ENCODE measurements at regions of chr22 and their contacts with region 1.

Region 1: GRCh38 chr22:45107671-45108070 is 56.1 kb upstream of the NUP50 start:
- DNase-seq: no peak
- H3K4me3 ChIP-seq: no peak overlapping the region
- H3K27ac ChIP-seq: no peak overlapping the region
- H3K4me1 ChIP-seq: no peaks in the 10 kb centered on the region
- H3K27me3 ChIP-seq: peaks cover 0 to 1% (median 0%) of the 10 kb centered on the region in 4 experiments; a peak in 1 of 7 replicates
- CTCF ChIP-seq: no peak
- EP300 ChIP-seq: no peak
- POLR2A ChIP-seq: no peak
- RAD21 ChIP-seq: no peak

Region 2: GRCh38 chr22:45096256-45096907 is 11.3 kb before region 1 on chr22:
- CTCF ChIA-PET with region 1: interaction called, 33 read pairs
- POLR2A ChIA-PET with region 1: no interaction called
- DNase-seq: peak in 1 of 2 experiments; percentile 81
- H3K4me3 ChIP-seq: no peak overlapping the region
- H3K27ac ChIP-seq: no peak overlapping the region
- H3K4me1 ChIP-seq: peaks cover 0 to 4% (median 0%) of the 10 kb centered on the region in 4 experiments; a peak in 2 of 7 replicates
- H3K27me3 ChIP-seq: no peaks in the 10 kb centered on the region
- CTCF ChIP-seq: peak; percentile 64 to 91 (median 86)
- EP300 ChIP-seq: no peak
- POLR2A ChIP-seq: no peak
- RAD21 ChIP-seq: peak; percentile 81 to 86

Region 3: DNA sequence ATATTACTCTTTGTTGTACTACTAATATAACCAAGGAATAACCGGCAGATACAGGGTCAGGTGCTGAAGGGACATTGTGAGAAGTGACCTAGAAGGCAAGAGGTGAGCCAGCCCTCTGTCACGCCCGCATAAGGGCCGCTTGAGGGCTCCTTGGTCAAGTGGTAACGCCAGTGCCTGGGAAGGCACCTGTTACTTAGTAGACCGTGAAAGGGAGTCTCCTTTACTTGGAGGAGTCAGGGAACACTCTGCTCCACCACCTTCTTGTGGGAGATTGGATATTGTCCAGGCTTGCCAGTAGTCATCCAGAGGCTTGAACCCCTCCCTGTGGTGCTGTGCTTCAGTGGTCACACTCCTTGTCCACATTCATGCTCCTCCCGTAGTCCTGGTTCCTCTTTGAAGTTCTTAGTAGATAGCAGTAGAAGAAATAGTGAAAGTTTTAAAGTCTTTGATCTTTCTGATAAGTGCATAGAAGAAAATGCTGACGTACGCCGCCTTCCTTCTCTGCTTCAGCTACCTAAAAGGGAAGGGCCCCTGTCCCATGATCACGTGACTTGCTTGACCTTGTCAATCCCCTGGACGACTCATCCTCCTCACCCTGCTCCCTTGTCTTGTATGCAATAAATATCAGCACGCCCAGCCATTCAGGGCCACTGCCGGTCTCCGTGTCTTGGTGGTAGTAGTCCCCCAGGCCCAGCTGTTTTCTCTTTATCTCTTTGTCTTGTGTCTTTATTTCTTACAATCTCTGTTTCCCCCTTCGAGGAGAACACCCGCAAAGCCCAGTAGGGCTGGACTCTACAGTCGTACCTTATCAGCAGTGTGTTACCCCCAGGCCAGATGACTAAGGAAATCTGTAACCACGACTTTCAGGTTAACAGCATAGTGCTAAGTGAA is 62.1 kb after region 1 on chr22:
- CTCF ChIA-PET with region 1: no interaction called
- POLR2A ChIA-PET with region 1: no interaction called
- DNase-seq: no peak
- H3K4me3 ChIP-seq: no peak overlapping the region
- H3K27ac ChIP-seq: no peak overlapping the region
- H3K4me1 ChIP-seq: peaks cover 0 to 3% (median 0%) of the 10 kb centered on the region in 4 experiments; a peak in 3 of 7 replicates
- H3K27me3 ChIP-seq: no peaks in the 10 kb centered on the region
- CTCF ChIP-seq: no peak
- EP300 ChIP-seq: no peak
- POLR2A ChIP-seq: no peak
- RAD21 ChIP-seq: no peak